T-cell (primary cell): ENCODE measurements at regions of chr15 and their contacts with region 1.

Region 1: DNA sequence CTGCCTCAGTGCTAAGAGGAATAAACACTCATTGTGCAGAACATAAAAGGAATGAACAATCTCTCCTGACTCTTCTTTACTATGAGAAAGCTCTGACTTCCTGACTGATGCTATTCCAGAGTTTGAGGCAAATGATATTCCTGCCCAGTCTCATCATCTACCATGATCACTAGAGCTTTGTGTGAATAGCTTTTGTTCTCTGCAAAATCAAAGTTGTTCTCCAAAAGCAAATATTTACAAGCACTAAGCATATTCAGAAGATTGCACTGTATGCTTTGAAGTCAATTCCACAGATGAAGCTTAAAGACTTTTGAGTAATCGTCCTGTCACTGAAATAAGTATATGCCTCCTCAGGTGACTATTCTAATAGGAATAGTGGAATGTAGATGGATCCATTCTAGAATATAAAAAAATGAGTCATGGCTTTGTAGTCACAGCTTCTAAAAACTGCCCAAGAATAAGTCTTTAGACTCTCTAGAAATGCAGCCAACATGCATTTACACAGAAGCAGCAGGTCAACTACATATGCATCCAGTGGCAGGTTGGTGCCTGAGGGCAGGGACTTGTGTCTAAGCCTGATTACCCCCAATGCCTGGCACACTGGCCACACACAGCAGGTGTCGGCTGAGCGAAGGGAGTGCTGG is 34.6 kb downstream of the TNFAIP8L3 start:
- DNase-seq: no peak
- ATAC-seq: no peak
- H3K4me3 ChIP-seq: no peak overlapping the region
- H3K4me3 Mint-ChIP-seq: no peak overlapping the region
- H3K27ac ChIP-seq: no peak overlapping the region
- H3K27ac Mint-ChIP-seq: no peak overlapping the region
- H3K4me1 ChIP-seq: no peaks in the 10 kb centered on the region
- H3K4me1 Mint-ChIP-seq: no peaks in the 10 kb centered on the region
- H3K27me3 ChIP-seq: peaks cover 3 to 4% of the 10 kb centered on the region in 2 experiments
- H3K27me3 Mint-ChIP-seq: peaks cover 14 to 24% of the 10 kb centered on the region in 2 donors

Region 2: GRCh38 chr15:51011212-51011611 is 48.9 kb before region 1 on chr15:
- CTCF ChIA-PET with region 1: no interaction called
- POLR2A ChIA-PET with region 1: interaction called in 1 of 2 experiments, 10 read pairs
- DNase-seq: no peak
- ATAC-seq: no peak
- H3K4me3 ChIP-seq: no peak overlapping the region
- H3K4me3 Mint-ChIP-seq: no peak overlapping the region
- H3K27ac ChIP-seq: no peak overlapping the region
- H3K27ac Mint-ChIP-seq: no peak overlapping the region
- H3K4me1 ChIP-seq: no peaks in the 10 kb centered on the region
- H3K4me1 Mint-ChIP-seq: no peaks in the 10 kb centered on the region
- H3K27me3 ChIP-seq: no peaks in the 10 kb centered on the region
- H3K27me3 Mint-ChIP-seq: no peaks in the 10 kb centered on the region

Region 3: DNA sequence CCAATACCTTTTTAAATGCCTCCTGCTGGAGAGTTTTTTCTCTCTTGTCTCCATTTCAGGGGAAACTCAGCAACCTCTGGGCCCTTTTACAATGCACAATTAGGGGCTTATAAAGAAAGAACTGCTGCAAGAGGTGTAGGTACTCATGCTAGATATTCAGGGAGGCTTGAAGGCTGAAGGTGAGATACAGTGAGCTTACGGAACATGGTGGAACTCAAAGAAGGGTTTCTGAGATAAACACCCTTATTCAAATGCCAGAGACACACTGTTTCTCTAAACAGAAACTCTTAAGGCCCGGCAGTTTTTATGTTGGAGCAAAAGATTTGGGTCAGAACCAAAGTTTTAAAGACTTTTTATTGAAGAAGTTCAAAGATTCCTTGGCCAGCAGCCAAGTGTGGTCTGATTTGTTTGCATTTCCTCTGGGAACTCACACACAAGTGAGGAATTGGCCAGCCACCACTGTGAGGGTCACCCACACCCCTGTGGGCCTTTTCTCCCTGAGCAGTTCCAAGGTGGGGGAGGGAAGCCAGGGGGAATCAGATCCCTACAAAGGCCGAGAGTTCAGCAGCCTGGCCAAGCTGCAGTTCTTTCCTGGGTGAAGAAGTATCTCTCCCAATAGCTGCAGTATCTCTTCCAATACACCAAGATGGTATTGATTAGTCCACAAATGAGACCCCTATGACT is 13.2 kb before region 1 on chr15:
- CTCF ChIA-PET with region 1: no interaction called
- POLR2A ChIA-PET with region 1: no interaction called
- DNase-seq: no peak
- ATAC-seq: no peak
- H3K4me3 ChIP-seq: no peak overlapping the region
- H3K4me3 Mint-ChIP-seq: no peak overlapping the region
- H3K27ac ChIP-seq: no peak overlapping the region
- H3K27ac Mint-ChIP-seq: no peak overlapping the region
- H3K4me1 ChIP-seq: no peaks in the 10 kb centered on the region
- H3K4me1 Mint-ChIP-seq: no peaks in the 10 kb centered on the region
- H3K27me3 ChIP-seq: peaks cover 0 to 6% of the 10 kb centered on the region in 2 experiments
- H3K27me3 Mint-ChIP-seq: peaks cover 3 to 8% of the 10 kb centered on the region in 2 donors